ENCODE measurements at regions of chrX and their contacts with region 1.

Region 1: DNA sequence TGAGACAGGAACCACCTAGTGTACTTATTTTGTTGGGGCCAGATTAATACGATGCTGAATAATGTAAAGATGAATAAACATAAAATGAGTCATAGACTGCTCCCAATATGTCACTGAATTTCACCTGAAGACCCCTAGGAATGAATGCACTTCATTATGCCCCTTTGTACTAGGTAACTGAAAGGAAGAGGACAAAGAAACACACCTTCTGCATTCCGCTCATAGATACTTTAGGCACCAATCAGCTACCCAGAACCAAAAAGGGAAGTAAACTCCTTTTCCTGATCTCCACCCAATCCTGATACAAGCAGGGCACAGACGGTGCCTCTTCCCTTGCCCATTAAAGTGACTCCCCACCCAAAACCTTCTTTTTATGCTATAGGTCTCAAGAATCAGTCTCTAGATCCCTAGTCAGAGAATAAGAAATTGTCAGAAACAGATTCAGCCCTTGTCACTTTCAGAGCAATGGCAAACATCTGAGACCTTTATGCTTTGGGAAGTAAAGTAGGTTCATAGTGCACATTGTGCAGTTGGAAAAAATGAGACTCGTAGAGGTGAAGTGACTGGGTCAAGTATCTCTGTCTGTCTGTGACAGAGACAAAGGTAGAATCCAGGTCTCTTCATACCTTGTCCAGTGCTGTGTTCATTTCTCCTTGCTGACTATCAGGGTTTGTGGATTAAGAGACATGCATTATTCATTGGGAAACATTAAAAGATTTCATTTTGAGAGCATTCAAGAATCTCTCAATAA is 2.3 kb downstream of the GPR174 start:
- DNase-seq: peak in 4 of 14 experiments; percentile 32 to 80 (median 44)
- ATAC-seq: peak; percentile 22
- H3K4me3 ChIP-seq: peak overlapping the region; percentile 80
- H3K4me3 Mint-ChIP-seq: peak overlapping the region; percentile 95
- H3K27ac ChIP-seq: peak overlapping the region; percentile 73 to 77
- H3K27ac Mint-ChIP-seq: peak overlapping the region; percentile 95
- H3K4me1 ChIP-seq: peaks cover 20% of the 10 kb centered on the region
- H3K4me1 Mint-ChIP-seq: peaks cover 51% of the 10 kb centered on the region
- H3K27me3 ChIP-seq: no peaks in the 10 kb centered on the region
- H3K27me3 Mint-ChIP-seq: no peaks in the 10 kb centered on the region
- CTCF ChIP-seq: no peak

Region 2: DNA sequence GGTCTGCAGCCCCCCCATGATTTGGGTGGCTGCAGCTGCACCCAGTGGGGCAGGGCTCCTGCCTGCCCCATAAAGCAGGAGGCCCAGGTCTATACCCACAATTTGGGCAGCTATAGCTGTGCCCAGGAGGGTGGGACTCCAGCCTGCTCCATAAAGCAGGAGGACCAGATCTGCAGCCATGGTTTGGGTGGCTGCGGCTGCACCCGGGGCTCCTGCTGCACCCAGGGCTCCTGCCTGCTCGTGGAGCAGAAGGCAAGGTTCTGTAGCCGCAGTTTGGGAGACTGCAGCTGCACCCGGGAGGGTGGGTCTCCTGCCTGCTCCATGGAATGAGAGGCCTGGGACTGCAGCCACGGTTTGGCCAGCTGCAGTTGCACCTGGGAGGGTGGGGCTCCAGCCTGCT is 1441.9 kb before region 1 on chrX:
- CTCF ChIA-PET with region 1: no interaction called
- POLR2A ChIA-PET with region 1: no interaction called
- intact Hi-C with region 1: no loop called
- DNase-seq: no peak
- ATAC-seq: no peak
- H3K4me3 ChIP-seq: no peak overlapping the region
- H3K4me3 Mint-ChIP-seq: no peak overlapping the region
- H3K27ac ChIP-seq: no peak overlapping the region
- H3K27ac Mint-ChIP-seq: no peak overlapping the region
- H3K4me1 ChIP-seq: no peaks in the 10 kb centered on the region
- H3K4me1 Mint-ChIP-seq: peaks cover 15% of the 10 kb centered on the region
- H3K27me3 ChIP-seq: no peaks in the 10 kb centered on the region
- H3K27me3 Mint-ChIP-seq: no peaks in the 10 kb centered on the region
- CTCF ChIP-seq: no peak

Region 3: GRCh38 chrX:78957768-78958130 is 189.1 kb before region 1 on chrX:
- CTCF ChIA-PET with region 1: no interaction called
- POLR2A ChIA-PET with region 1: no interaction called
- intact Hi-C with region 1: loop called in 1 of 2 experiments (anchors 5 kb)
- DNase-seq: no peak
- ATAC-seq: no peak
- H3K4me3 ChIP-seq: no peak overlapping the region
- H3K4me3 Mint-ChIP-seq: peak overlapping the region; percentile 45
- H3K27ac ChIP-seq: peak overlapping the region; percentile 13 to 28
- H3K27ac Mint-ChIP-seq: peak overlapping the region; percentile 63
- H3K4me1 ChIP-seq: peaks cover 28% of the 10 kb centered on the region
- H3K4me1 Mint-ChIP-seq: peaks cover 79% of the 10 kb centered on the region
- H3K27me3 ChIP-seq: no peaks in the 10 kb centered on the region
- H3K27me3 Mint-ChIP-seq: no peaks in the 10 kb centered on the region
- CTCF ChIP-seq: no peak

Region 4: DNA sequence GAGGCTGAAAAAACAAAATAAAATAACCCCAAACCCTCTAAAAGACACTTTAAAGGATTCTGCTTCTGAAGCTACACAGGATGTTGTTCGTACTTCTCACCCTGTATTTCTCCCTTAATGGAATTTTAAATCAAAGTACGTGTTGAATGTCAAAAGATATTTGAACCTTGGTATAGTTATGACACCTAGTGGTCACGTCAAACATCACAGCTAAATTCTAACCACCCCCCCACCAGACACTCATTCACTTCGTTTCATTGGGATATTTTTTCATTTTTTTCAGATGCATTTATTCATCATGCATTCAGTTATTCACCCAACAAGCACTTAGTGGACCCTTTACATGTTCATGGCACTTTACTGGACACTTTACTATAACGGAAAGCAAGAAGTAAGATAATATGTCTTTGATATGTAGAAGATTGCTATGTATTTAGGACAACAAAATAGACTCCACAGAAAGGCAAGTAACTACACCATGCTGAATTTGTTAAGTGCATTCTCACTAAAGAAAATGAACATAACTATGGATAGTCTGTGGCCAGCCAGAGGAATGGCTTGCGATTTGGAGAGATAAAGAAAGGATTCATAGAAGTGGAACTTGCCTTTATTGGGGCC is 64.8 kb before region 1 on chrX:
- CTCF ChIA-PET with region 1: interaction called, 7 read pairs
- POLR2A ChIA-PET with region 1: interaction called, 18 read pairs
- intact Hi-C with region 1: no loop called
- DNase-seq: peak in 7 of 14 experiments; percentile 8 to 79 (median 51)
- ATAC-seq: peak; percentile 88
- H3K4me3 ChIP-seq: no peak overlapping the region
- H3K4me3 Mint-ChIP-seq: peak overlapping the region; percentile 82
- H3K27ac ChIP-seq: no peak overlapping the region
- H3K27ac Mint-ChIP-seq: peak overlapping the region; percentile 82
- H3K4me1 ChIP-seq: peaks cover 2% of the 10 kb centered on the region
- H3K4me1 Mint-ChIP-seq: peaks cover 33% of the 10 kb centered on the region
- H3K27me3 ChIP-seq: no peaks in the 10 kb centered on the region
- H3K27me3 Mint-ChIP-seq: no peaks in the 10 kb centered on the region
- CTCF ChIP-seq: peak; percentile 43

Region 5: DNA sequence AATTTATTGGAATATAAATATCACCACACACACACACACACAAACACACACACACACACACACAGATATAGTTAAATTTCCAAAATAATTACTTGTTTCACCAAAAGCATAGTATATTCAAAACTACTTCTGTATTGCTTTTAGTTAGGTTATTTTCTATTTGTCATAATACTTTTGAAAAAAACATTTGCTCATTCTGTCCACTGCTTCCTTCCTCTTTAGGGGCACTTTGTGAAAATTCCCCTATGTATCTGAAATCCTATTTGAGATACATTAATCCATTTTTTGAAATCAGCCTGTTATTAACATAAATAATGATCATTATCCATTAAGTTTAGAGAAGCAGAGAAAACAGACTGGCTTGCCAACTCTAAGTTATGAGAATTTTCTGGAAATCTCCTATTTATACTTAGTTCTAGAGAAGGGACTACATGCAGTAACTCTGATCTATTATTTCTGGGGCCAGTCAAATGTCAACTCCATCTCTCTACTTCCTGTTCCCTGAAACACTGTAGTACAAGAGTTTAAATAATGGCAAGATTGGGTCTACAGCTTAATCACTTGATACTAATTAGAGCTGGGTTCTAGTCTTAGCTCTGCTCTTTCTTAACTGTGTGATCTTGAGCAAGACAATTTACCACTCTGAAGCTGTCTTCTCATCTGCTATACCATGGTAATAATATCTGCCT is 56.8 kb before region 1 on chrX:
- CTCF ChIA-PET with region 1: no interaction called
- POLR2A ChIA-PET with region 1: interaction called, 4 read pairs
- intact Hi-C with region 1: loop called in 1 of 2 experiments (anchors 5 kb)
- DNase-seq: no peak
- ATAC-seq: no peak
- H3K4me3 ChIP-seq: no peak overlapping the region
- H3K4me3 Mint-ChIP-seq: peak overlapping the region; percentile 8
- H3K27ac ChIP-seq: peak overlapping the region; percentile 7 to 9
- H3K27ac Mint-ChIP-seq: peak overlapping the region; percentile 68
- H3K4me1 ChIP-seq: peaks cover 12% of the 10 kb centered on the region
- H3K4me1 Mint-ChIP-seq: peaks cover 59% of the 10 kb centered on the region
- H3K27me3 ChIP-seq: no peaks in the 10 kb centered on the region
- H3K27me3 Mint-ChIP-seq: no peaks in the 10 kb centered on the region
- CTCF ChIP-seq: no peak

Region 6: DNA sequence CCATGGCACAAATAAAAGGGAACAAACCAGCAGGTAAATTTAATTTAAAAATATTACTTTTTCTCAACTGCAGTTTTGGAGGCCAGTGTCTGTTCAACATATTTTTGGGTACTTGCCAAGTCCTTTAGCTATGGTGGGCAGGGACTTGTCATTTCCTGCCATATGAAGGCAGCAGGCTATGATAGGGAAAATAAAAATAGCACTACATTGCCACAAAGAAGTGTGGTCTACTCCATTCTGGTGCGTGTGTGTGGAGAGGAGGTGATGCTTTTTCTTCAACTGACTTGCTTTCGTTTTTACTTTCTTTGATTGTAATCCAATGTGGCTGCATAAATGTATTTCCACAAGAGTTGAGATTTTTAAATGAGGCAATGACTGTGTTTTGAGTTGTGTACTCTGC is 14.8 kb after region 1 on chrX:
- CTCF ChIA-PET with region 1: interaction called, 4 read pairs
- POLR2A ChIA-PET with region 1: interaction called, 57 read pairs
- intact Hi-C with region 1: loop called in 1 of 2 experiments (anchors 2 kb)
- DNase-seq: peak in 8 of 14 experiments; percentile 14 to 92 (median 52)
- ATAC-seq: peak; percentile 88
- H3K4me3 ChIP-seq: peak overlapping the region; percentile 50
- H3K4me3 Mint-ChIP-seq: peak overlapping the region; percentile 94
- H3K27ac ChIP-seq: peak overlapping the region; percentile 74 to 80
- H3K27ac Mint-ChIP-seq: peak overlapping the region; percentile 97
- H3K4me1 ChIP-seq: peaks cover 25% of the 10 kb centered on the region
- H3K4me1 Mint-ChIP-seq: peaks cover 88% of the 10 kb centered on the region
- H3K27me3 ChIP-seq: no peaks in the 10 kb centered on the region
- H3K27me3 Mint-ChIP-seq: no peaks in the 10 kb centered on the region
- CTCF ChIP-seq: no peak

Region 7: GRCh38 chrX:79259073-79259689 is 112.4 kb after region 1 on chrX:
- CTCF ChIA-PET with region 1: no interaction called
- POLR2A ChIA-PET with region 1: interaction called, 9 read pairs
- intact Hi-C with region 1: loop called in 1 of 2 experiments (anchors 5 kb)
- DNase-seq: peak in 13 of 14 experiments; percentile 3 to 85 (median 34)
- ATAC-seq: peak; percentile 88
- H3K4me3 ChIP-seq: no peak overlapping the region
- H3K4me3 Mint-ChIP-seq: peak overlapping the region; percentile 84
- H3K27ac ChIP-seq: peak overlapping the region; percentile 52 to 75
- H3K27ac Mint-ChIP-seq: peak overlapping the region; percentile 99
- H3K4me1 ChIP-seq: peaks cover 16% of the 10 kb centered on the region
- H3K4me1 Mint-ChIP-seq: peaks cover 91% of the 10 kb centered on the region
- H3K27me3 ChIP-seq: no peaks in the 10 kb centered on the region
- H3K27me3 Mint-ChIP-seq: no peaks in the 10 kb centered on the region
- CTCF ChIP-seq: no peak

Region 8: DNA sequence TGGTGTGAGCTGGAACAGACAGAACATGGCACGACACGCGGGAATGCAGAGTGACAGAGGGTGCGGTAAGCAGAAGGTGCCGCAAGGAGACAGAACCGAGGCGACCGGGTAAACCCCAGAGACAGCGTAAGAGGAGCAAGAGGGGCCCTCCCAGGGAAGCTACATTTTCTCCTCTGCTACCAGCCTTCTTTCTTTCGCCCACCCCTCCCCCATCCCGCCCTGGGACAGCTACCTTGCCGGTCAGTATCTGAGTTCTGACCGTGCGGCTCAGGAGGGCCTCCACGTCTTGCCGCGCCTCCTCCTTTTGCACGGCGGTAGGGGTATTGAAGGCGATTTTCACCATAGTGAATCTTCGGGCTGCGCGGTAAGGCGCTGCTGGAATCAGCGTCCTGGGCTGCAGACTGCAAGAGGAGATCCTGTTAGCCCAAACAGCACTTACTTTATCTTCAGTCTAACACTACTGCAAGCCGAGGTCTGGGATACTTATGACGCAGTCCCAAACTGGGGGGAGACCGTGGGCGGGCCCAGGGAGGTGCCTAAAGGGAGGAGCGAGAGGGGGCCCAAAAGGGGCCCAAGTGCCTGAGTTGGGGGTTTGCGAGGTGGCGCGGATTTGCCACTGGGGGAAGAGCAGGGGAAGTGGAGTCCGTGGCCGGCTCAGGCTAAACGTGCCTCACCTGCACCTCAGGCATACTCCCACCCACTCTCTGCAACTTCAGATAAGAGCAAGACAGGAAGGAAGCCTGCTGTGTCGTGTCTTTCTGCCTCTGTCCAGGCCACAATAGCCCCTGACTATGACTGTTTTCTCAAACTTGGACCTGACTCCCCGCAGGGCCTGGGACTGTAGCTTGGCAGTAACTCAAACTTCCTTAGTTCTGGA is 220.3 kb after region 1 on chrX and contains the start of gene ITM2A:
- CTCF ChIA-PET with region 1: no interaction called
- POLR2A ChIA-PET with region 1: interaction called, 15 read pairs
- intact Hi-C with region 1: no loop called
- DNase-seq: peak; percentile 36 to 85 (median 55)
- ATAC-seq: peak; percentile 86
- H3K4me3 ChIP-seq: peak within 1 kb of the TSS; percentile 86
- H3K4me3 Mint-ChIP-seq: peak within 1 kb of the TSS; percentile 98
- H3K27ac ChIP-seq: peak within 1 kb of the TSS; percentile 77 to 88
- H3K27ac Mint-ChIP-seq: peak within 1 kb of the TSS; percentile 99
- H3K4me1 ChIP-seq: peaks cover 13% of the 10 kb centered on the region
- H3K4me1 Mint-ChIP-seq: peaks cover 27% of the 10 kb centered on the region
- H3K27me3 ChIP-seq: no peaks in the 10 kb centered on the region
- H3K27me3 Mint-ChIP-seq: no peaks in the 10 kb centered on the region
- CTCF ChIP-seq: no peak
- total RNA-seq, gene ITM2A: 236 to 259 TPM

Measured in CD4-positive, alpha-beta T cell (primary cell).